Common myeloid progenitor, CD34-positive (primary cell): ENCODE measurements at regions of chr3 and their contacts with region 1.

Region 1: DNA sequence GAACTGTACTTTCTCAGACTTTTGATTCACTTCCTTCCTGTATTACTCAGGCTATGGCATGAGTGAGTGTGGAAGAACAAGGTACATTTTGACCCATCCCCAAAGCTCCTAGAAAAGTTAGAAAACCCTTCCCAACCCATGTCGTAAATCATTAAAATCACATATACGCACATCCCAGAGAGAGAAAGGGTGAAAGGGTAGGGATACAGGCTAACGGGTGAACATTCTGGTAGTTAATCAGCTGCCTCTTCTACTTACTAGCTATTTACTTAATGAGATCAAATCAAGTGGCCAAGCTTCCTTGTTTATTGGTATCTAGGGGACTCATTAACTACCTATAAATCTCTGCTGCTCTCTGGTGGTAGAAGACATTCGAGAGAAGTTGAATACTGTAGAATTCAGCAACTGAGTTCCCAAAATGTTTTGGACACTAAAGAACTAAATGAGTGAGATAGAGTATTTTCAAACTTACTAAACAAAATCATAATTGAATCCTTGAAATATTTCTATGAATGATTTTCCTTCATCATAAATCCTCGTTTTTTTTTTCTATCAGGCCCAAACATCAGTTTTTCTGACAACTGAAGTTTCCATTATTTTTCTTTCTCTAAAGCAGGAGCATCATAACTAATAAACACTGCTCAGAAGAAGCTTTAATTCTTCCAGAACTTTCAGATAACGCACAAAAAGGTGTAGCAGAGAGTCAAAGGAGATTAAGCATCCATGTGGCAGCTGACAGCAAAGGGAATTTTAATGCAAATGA is 124.2 kb downstream of the IMPG2 start:
- DNase-seq: peak; percentile 43 to 66 (median 64)
- H3K4me3 ChIP-seq: no peak overlapping the region
- H3K27ac ChIP-seq: no peak overlapping the region
- H3K4me1 ChIP-seq: peaks cover 0 to 7% (median 2%) of the 10 kb centered on the region in 4 experiments
- H3K27me3 ChIP-seq: no peaks in the 10 kb centered on the region

Region 2: GRCh38 chr3:100893590-100893989 is 302.5 kb before region 1 on chr3:
- CTCF ChIA-PET with region 1: interaction called, 11 read pairs
- POLR2A ChIA-PET with region 1: no interaction called
- DNase-seq: peak in 2 of 3 donors; percentile 35 to 39
- H3K4me3 ChIP-seq: no peak overlapping the region
- H3K27ac ChIP-seq: no peak overlapping the region
- H3K4me1 ChIP-seq: peaks cover 4 to 19% (median 12%) of the 10 kb centered on the region in 4 experiments
- H3K27me3 ChIP-seq: no peaks in the 10 kb centered on the region

Region 3: DNA sequence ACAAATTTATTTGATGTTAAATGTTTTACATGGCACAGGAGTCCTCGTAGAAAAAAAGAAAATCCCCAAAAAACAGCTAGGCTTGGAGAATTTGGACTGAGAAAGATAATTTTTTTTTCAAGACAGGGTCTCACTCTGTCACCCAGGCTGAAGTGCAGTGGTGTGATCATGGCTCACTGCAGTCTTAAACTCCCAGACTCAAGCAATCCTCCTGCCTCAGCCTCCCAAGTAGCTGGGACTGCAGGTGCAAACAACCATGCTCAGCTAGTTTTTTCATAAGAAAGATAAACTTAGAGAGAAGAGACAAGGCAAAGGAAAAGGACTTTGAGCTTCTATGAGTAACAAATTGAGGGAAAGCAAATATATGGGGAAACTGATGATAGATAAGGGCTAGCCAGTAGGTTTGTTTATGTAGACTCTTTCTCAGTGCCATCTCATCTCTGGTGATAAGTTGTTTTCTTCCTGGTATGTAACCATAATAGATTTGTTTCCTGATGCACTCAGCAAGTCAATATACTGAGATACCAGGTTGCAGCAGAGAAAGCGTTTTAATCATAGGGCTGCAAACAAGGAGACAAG is 352.5 kb after region 1 on chr3:
- CTCF ChIA-PET with region 1: no interaction called
- POLR2A ChIA-PET with region 1: no interaction called
- DNase-seq: no peak
- H3K4me3 ChIP-seq: no peak overlapping the region
- H3K27ac ChIP-seq: no peak overlapping the region
- H3K4me1 ChIP-seq: no peaks in the 10 kb centered on the region
- H3K27me3 ChIP-seq: no peaks in the 10 kb centered on the region